ENCODE measurements at regions of chr12 and their contacts with region 1.

Region 1: DNA sequence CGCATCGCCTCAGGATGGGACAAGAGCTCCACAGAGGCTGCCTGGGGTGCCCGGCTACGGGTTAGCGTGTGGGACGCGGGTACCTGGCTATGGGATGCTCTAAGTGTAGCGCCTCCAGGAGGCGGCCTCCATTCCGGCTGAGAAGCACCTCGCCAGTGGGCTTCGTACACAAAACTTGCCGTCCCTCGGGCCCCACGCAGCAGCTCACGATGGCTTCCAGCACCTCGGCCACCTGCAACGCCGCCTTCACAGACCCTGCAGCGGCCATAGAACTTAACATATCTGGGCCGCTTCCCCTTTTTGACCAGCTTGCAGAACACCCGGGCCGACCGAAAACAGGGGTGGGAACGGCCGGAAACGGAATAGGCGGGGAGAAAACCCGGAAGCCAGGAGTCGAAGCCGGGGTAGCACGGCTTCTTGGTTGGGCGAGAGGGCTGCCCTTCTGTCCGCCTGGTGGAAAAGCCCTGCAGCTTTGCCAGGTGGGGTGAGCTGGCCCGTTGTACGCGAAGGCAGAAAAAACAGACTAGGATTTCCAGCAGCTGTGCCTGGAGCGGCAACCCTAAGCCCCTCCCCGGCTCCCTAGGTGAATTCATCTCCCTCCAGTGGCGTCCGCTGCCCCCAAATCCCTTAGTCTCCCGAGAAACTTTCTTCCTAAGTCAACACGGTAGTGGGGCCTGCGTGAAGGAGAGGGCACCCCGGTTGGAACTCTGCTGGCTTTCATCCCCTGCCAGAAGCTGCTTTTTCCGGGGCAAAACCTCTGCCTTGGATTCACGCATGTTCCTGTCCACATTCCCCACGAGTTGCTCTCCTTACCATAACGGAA is at the start of gene BBS10:
- DNase-seq: peak; percentile 95
- H3K4me3 ChIP-seq: peak within 1 kb of the TSS; percentile 94
- H3K27ac ChIP-seq: peak within 1 kb of the TSS; percentile 86
- H3K4me1 ChIP-seq: peaks cover 7% of the 10 kb centered on the region
- H3K27me3 ChIP-seq: no peaks in the 10 kb centered on the region
- CTCF ChIP-seq: peak; percentile 65
- total RNA-seq, gene BBS10: 6.3 and 6.5 TPM in 2 replicates

Region 2: DNA sequence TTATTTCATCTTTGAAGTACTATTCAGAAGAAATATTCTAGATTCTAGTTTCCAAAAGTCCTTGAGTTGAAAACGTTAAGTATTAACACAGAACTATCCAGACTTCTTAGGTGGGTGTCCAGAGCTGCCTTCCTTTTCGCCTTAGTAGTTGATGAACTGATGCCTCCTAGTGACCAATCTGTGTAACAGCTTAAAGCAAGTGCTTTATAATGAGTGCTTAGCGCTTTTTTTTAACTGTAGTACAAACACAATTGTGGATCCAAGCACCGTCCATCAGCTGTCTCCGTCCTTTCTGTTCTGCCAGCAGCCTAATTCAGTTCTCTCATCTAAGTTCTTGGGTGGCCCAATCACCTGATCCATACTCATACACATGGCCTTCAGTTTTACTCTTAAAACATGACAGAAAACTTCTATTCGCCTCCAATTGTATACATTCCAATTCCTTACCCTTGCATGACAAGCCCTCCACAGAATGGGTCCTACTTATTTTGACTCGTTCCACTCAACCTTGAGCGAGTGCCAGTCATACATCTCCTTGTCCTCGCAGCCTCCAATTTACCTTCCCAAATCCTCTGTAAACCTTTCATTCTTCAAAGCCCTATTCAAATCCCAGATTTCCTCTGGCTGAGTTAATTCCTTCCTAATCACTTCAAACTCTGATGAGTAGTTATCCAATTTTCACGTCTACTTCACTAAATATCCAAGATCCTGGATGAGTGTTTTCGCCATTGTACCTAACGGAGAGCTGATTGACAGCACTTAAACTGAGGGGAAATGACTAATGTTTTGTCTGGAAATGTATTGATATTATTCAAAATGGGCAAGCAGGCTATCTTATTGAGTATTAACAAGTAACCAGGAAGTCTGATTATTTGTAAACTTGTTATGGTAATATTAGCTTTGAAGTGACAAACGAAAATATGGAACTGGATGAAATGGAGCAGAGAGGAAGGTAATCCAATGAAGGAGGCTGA is 310.9 kb before region 1 on chr12:
- CTCF ChIA-PET with region 1: no interaction called
- POLR2A ChIA-PET with region 1: no interaction called
- intact Hi-C with region 1: loop called (anchors 5 kb)
- DNase-seq: peak; percentile 88
- H3K4me3 ChIP-seq: peak overlapping the region; percentile 15
- H3K27ac ChIP-seq: no peak overlapping the region
- H3K4me1 ChIP-seq: peaks cover 21% of the 10 kb centered on the region
- H3K27me3 ChIP-seq: no peaks in the 10 kb centered on the region
- CTCF ChIP-seq: peak; percentile 89

Region 3: GRCh38 chr12:76144245-76144549 is 204.1 kb before region 1 on chr12:
- CTCF ChIA-PET with region 1: no interaction called
- POLR2A ChIA-PET with region 1: interaction called, 11 read pairs
- intact Hi-C with region 1: no loop called
- DNase-seq: peak; percentile 43
- H3K4me3 ChIP-seq: no peak overlapping the region
- H3K27ac ChIP-seq: no peak overlapping the region
- H3K4me1 ChIP-seq: no peaks in the 10 kb centered on the region
- H3K27me3 ChIP-seq: no peaks in the 10 kb centered on the region
- CTCF ChIP-seq: no peak

Region 4: DNA sequence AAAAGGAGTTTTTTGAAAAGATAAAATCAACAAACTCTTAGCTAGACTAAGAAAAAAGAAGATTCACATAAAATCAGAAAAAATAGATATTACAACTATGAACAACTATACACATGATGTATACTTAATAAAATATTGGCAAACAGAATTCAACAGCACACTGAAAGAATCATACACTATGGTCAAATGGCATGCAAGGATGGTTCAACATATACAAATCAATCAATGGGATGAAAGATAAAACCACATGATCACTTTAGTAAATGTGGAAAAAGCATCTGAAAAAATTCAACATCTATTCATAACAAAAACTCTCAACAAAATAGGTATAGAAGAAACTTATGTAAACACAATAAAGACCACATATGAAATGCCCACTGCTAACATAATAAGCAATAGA is 84.4 kb after region 1 on chr12:
- CTCF ChIA-PET with region 1: no interaction called
- POLR2A ChIA-PET with region 1: no interaction called
- intact Hi-C with region 1: no loop called
- DNase-seq: no peak
- H3K4me3 ChIP-seq: no peak overlapping the region
- H3K27ac ChIP-seq: no peak overlapping the region
- H3K4me1 ChIP-seq: no peaks in the 10 kb centered on the region
- H3K27me3 ChIP-seq: no peaks in the 10 kb centered on the region
- CTCF ChIP-seq: no peak

Region 5: DNA sequence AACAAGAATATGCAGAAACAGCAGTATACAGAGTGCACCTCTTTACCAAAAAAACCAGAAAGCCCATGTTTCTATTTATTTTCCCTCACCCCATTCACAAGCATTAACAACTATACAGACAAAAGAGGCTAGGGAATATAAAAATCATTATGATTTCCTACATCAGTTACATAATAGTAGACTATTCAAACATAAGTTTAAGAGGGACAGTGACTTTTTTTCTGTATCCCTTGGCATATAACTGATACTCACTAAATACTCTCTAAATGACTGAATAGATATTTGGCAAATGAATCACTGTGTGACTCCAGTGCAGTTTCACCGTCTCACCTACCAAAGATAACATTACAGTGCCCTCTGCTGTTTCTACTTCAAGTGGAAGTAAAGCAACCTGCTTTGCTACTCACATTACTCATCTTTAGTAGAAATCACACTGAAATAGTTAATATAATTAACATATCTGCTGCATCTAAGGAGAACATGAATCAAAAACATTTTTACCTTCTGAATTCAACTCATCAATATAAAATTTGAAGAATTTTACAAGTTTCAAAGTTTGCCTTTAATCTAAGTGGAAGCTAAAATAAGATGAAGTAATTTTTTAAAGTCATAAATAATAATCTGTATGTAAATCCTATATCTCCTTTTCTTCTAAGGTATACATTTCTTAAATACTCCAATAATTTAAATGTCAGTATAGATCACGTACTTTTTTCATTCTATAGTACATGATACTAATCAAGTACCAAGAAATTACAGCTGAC is 107.5 kb after region 1 on chr12:
- CTCF ChIA-PET with region 1: no interaction called
- POLR2A ChIA-PET with region 1: no interaction called
- intact Hi-C with region 1: loop called (anchors 5 kb)
- DNase-seq: peak; percentile 82
- H3K4me3 ChIP-seq: peak overlapping the region; percentile 8
- H3K27ac ChIP-seq: no peak overlapping the region
- H3K4me1 ChIP-seq: peaks cover 26% of the 10 kb centered on the region
- H3K27me3 ChIP-seq: no peaks in the 10 kb centered on the region
- CTCF ChIP-seq: peak; percentile 78

Measured in A673 (cell line).